Motor neuron (in vitro differentiated cells): ENCODE measurements at regions of chr1 and their contacts with region 1.

Region 1: GRCh38 chr1:30911046-30911954 is 2.7 kb upstream of the SDC3 start:
- ATAC-seq: peak; percentile 48 to 82 (median 61)
- H3K4me3 ChIP-seq: no peak overlapping the region
- H3K27ac ChIP-seq: no peak overlapping the region
- H3K4me1 ChIP-seq: peaks cover 24 to 38% of the 10 kb centered on the region in 2 donors

Region 2: GRCh38 chr1:30670240-30671060 is 240.8 kb before region 1 on chr1:
- in situ Hi-C with region 1: no loop called
- ATAC-seq: peak in 7 of 8 experiments; percentile 18 to 75 (median 65)
- H3K4me3 ChIP-seq: no peak overlapping the region
- H3K27ac ChIP-seq: no peak overlapping the region
- H3K4me1 ChIP-seq: peaks cover 15 to 34% of the 10 kb centered on the region in 2 donors

Region 3: DNA sequence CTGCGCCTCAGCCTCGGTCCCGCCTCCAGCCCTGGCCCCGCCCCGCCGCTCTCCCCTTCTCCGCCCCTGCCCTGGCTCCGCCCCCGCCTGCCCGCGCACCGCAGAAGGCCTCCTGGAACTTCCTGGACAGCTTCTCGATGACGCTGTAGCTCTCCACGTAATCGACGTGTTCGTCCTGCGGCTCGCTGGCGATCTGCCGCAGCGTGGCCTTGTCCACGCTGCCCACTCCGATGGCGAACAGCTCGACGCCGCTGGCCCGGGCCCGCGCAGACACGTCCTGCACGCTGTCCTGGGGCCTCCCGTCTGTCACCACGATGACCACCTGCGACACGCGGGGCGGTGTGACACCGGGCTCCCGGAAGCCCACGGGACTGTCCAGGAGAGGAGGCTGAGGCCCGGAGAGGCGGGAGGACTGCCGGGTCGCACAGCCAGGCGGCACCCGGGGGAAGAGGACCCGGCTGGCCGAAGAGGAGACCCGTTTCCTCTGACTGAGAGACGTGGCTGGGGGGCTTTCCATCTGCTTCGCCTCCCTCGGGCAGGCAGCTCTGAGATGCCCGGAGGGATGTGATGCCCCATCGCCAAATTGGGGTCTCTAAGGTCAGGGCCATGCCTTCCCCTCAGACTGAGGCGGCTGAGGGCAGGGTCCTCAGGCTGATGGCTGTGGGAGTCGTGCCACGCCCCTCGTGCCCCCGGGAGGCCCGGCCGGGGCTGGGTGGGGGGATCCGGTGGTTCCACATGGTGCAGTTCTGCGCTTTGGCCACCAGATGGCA is 192.5 kb before region 1 on chr1:
- in situ Hi-C with region 1: loop called in 1 of 9 experiments (anchors 10 kb)
- ATAC-seq: peak; percentile 63 to 75 (median 66)
- H3K4me3 ChIP-seq: peak overlapping the region; percentile 28 to 41 (median 31)
- H3K27ac ChIP-seq: peak overlapping the region; percentile 96 to 98
- H3K4me1 ChIP-seq: peaks cover 6 to 8% of the 10 kb centered on the region in 2 donors

Region 4: DNA sequence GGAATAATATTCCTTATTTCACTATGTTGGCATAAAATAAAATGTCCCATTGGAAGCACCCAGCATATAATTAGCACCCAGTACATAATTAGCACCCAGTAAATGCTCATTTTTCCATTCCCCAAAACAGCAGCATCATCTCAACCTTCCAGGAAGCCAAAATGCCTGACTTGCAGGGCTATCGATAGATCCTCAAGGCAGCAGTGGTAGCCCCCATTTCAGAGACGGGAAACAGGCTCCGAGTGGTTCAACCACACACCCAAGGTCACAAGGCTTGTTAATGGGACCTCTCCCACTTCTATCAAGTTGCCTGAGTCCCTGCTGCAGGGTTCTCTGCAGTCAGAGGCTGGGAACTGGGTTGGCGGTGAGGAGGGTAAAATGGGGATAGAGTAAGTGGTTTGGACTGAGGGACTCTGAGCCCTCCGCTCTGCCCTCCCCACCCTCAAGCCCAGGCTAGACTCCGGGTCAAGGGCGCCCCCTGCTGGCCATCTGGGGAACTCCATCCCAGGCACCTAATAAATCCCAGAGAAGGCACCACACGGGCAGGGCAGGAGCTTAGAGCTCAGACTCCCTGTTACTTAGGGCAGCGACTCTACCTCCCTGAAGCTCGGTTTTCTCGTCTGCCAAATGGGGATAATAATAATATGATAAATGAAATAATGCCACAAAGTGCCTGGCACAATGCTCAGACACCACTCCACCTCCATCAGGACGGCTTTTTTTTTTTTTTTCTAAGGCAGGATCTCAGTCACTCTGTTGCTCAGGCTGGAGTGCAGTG is 131.8 kb before region 1 on chr1:
- in situ Hi-C with region 1: loop called in 1 of 9 experiments (anchors 10 kb)
- ATAC-seq: peak; percentile 46 to 79 (median 70)
- H3K4me3 ChIP-seq: no peak overlapping the region
- H3K27ac ChIP-seq: no peak overlapping the region
- H3K4me1 ChIP-seq: peaks cover 15 to 38% of the 10 kb centered on the region in 2 donors

Region 5: DNA sequence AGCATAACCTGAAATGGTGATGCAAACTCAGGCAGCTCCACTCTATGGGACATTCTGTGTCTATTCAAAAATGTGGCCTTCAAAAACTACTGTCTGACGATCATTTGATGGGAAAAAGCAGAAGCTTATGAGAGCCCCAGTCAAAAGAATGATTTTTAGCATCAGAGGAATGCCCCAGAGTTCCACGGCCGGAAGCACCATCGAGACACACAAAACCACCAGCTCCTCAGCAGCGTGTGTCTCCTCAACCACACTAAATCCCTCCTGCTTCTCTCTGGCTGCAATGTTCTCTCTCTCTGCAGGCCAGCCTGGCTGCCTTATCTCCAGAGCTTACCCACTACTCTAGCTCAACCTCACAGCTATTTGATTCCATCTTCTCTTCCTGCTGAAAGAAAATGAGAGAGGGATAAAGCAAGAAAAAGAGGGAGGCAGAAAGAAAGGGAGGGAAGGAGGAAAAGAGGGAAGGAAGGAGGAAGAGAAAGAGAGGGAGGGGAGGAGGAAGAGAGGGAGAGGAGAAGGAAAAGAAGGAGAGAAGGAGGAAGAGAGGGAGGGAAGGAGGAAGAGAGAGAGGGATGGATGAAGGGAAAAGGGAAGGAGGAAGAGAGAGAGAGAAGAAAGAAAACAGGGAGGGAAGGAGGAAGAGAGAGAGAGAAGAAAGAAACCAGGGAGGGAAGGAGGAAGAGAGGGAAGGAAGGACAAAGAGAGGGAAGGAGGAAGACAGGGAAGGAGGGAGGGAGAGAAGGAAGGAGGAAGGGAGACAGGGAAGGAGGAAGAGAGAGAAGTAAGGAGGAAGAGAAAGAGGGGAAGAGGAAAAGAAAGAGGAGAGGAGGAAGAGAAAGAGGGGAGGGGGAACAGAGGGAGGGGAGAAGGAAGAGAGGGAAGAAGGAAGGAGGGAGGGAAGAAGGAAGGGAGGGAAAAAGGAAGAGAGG is 120.2 kb before region 1 on chr1:
- in situ Hi-C with region 1: loop called in 3 of 9 experiments (anchors 5 to 10 kb)
- ATAC-seq: no peak
- H3K4me3 ChIP-seq: no peak overlapping the region
- H3K27ac ChIP-seq: no peak overlapping the region
- H3K4me1 ChIP-seq: peaks cover 9 to 31% of the 10 kb centered on the region in 2 donors

Region 6: DNA sequence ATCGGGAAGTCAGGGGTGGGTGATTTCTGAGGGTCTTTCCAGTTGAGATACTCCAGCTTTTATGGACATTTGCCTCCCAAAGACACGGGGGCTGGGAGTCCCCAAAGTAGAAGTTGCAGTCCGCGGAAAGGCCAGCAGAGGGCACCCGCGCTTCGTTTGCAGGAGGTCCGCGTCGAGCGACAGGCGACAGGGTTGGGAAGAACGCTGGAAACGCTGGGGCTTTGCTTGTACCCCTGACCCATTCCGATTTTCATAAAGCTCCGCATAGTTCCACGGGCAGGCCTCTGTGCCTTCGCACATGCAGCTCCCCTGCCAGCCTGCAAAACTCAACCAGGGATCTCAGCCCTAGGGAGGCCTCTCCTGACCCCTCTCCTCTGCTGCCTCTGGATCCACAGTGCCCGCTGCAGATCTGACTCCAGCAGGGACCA is 109.5 kb before region 1 on chr1:
- in situ Hi-C with region 1: loop called in 7 of 9 experiments (anchors 5 to 10 kb)
- ATAC-seq: peak; percentile 68 to 90 (median 74)
- H3K4me3 ChIP-seq: no peak overlapping the region
- H3K27ac ChIP-seq: no peak overlapping the region
- H3K4me1 ChIP-seq: peaks cover 25 to 34% of the 10 kb centered on the region in 2 donors

Region 7: GRCh38 chr1:31394628-31395193 is 483.4 kb after region 1 on chr1:
- in situ Hi-C with region 1: no loop called
- ATAC-seq: peak; percentile 96 to 99 (median 98)
- H3K4me3 ChIP-seq: peak overlapping the region in 4 of 5 donors; percentile 11 to 18 (median 14)
- H3K27ac ChIP-seq: no peak overlapping the region
- H3K4me1 ChIP-seq: peaks cover 0 to 5% of the 10 kb centered on the region in 2 donors

Region 8: DNA sequence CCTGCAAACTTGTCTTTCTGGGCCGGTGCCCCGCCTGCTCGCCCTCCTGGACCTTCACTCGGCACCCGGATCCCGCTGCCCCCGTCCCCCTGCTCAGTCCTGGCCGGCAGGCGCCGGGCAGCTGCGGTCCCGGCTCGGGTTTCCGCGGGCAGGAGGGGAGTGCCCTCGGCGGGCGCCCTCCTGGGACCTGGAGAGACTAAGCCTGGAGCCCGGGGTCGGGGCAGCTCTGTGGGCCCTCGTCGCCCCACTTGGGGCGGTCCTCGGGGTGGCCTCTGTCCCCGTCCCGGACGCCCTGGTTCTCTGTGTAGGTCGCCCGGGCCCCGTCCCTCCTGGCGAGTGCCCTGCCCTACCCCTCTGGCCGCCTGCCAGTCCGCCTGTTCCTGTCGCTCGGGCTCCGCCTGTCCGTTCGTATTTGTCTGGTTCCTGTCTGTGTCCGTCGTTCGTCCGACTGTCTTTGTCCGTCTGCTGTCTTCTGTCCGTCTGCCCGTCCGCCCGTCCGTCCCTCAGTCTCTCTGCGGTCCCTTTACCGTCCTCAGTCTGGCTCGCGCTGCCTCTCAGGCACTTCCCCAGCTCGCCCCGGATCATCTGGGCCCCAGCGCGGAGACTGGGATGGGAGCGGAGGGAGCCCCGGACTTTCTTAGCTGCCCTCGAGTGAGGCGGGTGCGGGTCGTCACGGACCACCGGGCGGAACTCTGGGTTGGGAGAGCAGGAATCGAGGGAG is 502.3 kb after region 1 on chr1:
- in situ Hi-C with region 1: no loop called
- ATAC-seq: peak; percentile 47 to 83 (median 64)
- H3K4me3 ChIP-seq: peak overlapping the region; percentile 58 to 94 (median 61)
- H3K27ac ChIP-seq: peak overlapping the region; percentile 94 to 97
- H3K4me1 ChIP-seq: peaks cover 30% of the 10 kb centered on the region in 2 donors